IMR-90 (cell line): ENCODE measurements at regions of chr5 and their contacts with region 1.

Region 1: DNA sequence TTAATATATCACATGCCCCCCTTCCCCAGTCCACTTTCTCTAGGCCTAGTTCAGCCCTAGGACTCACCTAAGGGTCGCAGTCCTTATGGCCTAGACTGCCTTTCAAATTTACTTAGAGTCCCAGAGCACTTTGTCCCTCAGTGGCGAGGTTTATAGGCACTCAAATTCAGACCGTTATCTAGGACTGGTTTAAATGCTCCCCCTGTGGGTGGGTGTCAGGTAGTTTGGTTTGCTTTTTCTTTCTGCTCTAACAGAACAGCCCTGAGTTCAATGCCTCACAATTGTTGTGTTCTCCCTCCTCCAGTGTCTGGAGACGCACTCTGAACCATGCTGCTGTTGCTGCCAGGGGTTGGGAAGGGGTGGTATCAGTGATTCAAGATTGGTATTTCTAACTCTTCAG is 317.1 kb downstream of the MAT2B start:
- DNase-seq: no peak
- ATAC-seq: no peak
- H3K4me3 ChIP-seq: no peak overlapping the region
- H3K27ac ChIP-seq: no peak overlapping the region
- H3K4me1 ChIP-seq: no peaks in the 10 kb centered on the region
- H3K27me3 ChIP-seq: no peaks in the 10 kb centered on the region
- CTCF ChIP-seq: no peak
- POLR2A ChIP-seq: no peak
- RAD21 ChIP-seq: no peak

Region 2: GRCh38 chr5:163807781-163808180 is 14.8 kb before region 1 on chr5:
- CTCF ChIA-PET with region 1: interaction called, 12 read pairs
- POLR2A ChIA-PET with region 1: no interaction called
- dilution Hi-C with region 1: no loop called
- in situ Hi-C with region 1: no loop called
- intact Hi-C with region 1: no loop called
- DNase-seq: peak; percentile 82
- ATAC-seq: peak; percentile 21; the same call in 1 of the 2 replicates
- H3K4me3 ChIP-seq: no peak overlapping the region
- H3K27ac ChIP-seq: no peak overlapping the region
- H3K4me1 ChIP-seq: no peaks in the 10 kb centered on the region
- H3K27me3 ChIP-seq: no peaks in the 10 kb centered on the region
- CTCF ChIP-seq: no peak
- POLR2A ChIP-seq: no peak
- RAD21 ChIP-seq: no peak

Region 3: DNA sequence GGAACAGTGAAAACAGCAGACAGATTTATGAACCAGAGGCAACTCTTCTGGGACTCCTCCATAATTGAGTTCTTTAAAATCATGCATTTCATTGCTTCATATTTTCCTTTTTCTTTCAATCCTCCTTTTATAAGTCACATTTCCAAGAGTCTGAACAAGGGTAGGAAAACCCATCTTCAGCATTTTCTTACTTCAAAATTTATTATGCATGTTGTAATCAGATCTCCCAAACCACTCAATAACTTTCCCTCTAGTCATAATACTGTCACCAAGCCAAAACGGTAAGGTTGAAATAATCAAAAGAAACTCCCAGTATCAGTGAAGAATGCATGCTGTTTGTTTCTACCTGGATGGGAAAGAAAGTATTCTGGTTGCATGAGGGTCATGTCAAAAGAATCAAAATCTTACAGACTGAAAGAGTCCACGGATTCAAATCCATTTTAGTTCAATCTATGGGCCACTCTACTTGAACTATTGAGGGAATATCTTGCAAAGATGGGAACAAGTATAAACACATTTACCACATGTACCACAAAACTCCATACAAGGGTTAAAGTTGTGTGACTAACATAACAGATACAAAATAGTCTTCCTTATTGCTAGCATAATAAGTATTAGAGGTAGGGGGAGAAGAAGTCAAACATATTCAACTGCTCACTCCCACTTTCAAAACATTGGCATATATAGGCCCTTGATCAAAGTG is 480.1 kb after region 1 on chr5:
- CTCF ChIA-PET with region 1: no interaction called
- POLR2A ChIA-PET with region 1: no interaction called
- dilution Hi-C with region 1: no loop called
- in situ Hi-C with region 1: no loop called
- intact Hi-C with region 1: no loop called
- DNase-seq: peak; percentile 42
- ATAC-seq: no peak; the same call in 1 of the 2 replicates
- H3K4me3 ChIP-seq: no peak overlapping the region
- H3K27ac ChIP-seq: no peak overlapping the region
- H3K4me1 ChIP-seq: no peaks in the 10 kb centered on the region
- H3K27me3 ChIP-seq: no peaks in the 10 kb centered on the region
- CTCF ChIP-seq: no peak
- POLR2A ChIP-seq: no peak
- RAD21 ChIP-seq: no peak